ENCODE measurements at regions of chr10 and their contacts with region 1.

Region 1: GRCh38 chr10:52030051-52030790 is 283.9 kb upstream of the DKK1 start:
- DNase-seq: no peak
- H3K4me3 ChIP-seq: no peak overlapping the region
- H3K27ac ChIP-seq: no peak overlapping the region
- H3K4me1 ChIP-seq: peaks cover 0 to 21% (median 5%) of the 10 kb centered on the region in 4 experiments; a peak in 5 of 7 replicates
- H3K27me3 ChIP-seq: no peaks in the 10 kb centered on the region
- CTCF ChIP-seq: no peak
- EP300 ChIP-seq: no peak
- POLR2A ChIP-seq: peak in 1 of 2 experiments; percentile 48; a peak in 1 of 3 replicates
- RAD21 ChIP-seq: no peak

Region 2: DNA sequence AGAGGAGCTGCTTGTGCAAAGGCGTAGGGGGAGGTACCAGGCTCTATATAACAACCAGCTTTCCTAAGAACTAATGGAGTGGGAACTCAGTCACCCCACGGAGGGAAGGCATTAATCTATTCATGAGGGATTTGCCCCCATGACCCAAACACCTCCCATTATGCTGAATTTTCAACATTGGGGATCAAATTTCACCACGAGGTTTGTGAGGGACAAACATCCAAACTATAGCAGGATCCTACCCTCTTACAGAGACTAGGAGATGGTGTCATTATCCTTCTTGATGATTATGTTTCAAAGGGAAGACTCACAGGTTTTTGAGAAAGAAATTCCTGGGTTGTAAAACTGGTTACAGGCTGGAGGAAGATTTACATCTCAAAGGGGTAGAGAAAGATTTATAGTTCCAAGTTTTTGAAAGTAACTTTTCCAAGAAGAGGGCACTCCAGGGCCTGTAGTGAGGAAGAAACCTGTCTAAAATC is 11.1 kb before region 1 on chr10:
- CTCF ChIA-PET with region 1: no interaction called
- POLR2A ChIA-PET with region 1: interaction called, 19 read pairs
- DNase-seq: no peak
- H3K4me3 ChIP-seq: peak overlapping the region in 1 of 4 experiments; percentile 13; a peak in 1 of 8 replicates
- H3K27ac ChIP-seq: no peak overlapping the region
- H3K4me1 ChIP-seq: peaks cover 2 to 14% (median 9%) of the 10 kb centered on the region in 4 experiments; a peak in 4 of 7 replicates
- H3K27me3 ChIP-seq: no peaks in the 10 kb centered on the region
- CTCF ChIP-seq: no peak
- EP300 ChIP-seq: no peak
- POLR2A ChIP-seq: no peak
- RAD21 ChIP-seq: no peak

Region 3: DNA sequence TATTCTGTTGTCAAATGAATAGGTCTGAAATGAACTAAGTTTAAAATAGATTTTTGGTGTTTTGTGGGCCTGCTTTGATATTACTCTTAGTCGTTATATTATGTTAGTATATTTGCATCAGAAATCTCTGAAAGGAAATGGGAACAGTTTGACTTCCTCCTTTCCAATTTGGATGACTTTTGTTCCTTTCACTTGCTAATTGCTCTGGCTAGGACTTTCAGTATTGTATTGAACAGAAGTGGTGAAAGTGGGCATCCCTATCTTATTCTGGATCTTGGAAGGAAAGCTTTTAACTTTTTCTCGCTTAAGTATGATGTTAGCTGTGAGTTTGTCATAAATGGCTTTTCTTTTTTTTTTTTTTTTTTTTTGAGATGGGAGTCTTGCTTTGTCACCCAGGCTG is 10.3 kb after region 1 on chr10:
- CTCF ChIA-PET with region 1: no interaction called
- POLR2A ChIA-PET with region 1: interaction called, 28 read pairs
- DNase-seq: no peak
- H3K4me3 ChIP-seq: peak overlapping the region in 3 of 4 experiments; percentile 11 to 74 (median 24); a peak in 5 of 8 replicates
- H3K27ac ChIP-seq: no peak overlapping the region
- H3K4me1 ChIP-seq: peaks cover 0 to 21% (median 4%) of the 10 kb centered on the region in 4 experiments; a peak in 5 of 7 replicates
- H3K27me3 ChIP-seq: no peaks in the 10 kb centered on the region
- CTCF ChIP-seq: no peak
- EP300 ChIP-seq: peak in 1 of 2 experiments; percentile 22; a peak in 1 of 3 replicates
- POLR2A ChIP-seq: no peak
- RAD21 ChIP-seq: no peak

Region 4: DNA sequence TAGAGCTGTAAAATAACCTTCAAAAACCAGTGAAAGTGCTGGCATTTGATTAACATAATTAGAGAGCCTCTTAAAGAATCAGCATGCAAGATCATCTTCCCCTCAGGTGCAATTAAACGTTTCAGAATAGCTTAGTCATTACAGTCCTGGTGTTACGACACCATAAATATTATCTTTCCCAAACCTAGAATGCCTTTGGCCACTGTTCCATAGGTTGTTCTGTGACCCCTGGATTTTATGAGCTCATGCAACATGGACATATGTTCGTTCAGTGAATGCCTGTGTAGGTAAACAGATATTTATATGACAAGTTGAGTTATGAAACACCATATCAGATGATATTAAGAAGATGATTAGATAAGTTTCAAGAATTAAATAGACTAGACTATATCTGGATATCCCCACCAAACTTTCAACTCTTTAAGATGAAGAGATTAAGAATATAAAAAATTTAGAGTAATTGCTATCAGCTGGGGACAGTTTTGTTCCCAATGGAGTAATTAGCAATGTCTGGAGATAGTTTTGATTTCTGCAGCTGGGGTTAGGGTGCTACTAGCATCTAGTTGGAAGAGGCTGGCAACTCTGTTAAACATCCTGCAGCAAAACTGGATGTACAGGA is 20.3 kb after region 1 on chr10:
- CTCF ChIA-PET with region 1: interaction called, 4 read pairs
- POLR2A ChIA-PET with region 1: interaction called, 14 read pairs
- DNase-seq: no peak
- H3K4me3 ChIP-seq: no peak overlapping the region
- H3K27ac ChIP-seq: no peak overlapping the region
- H3K4me1 ChIP-seq: peaks cover 0 to 4% (median 0%) of the 10 kb centered on the region in 4 experiments; a peak in 1 of 7 replicates
- H3K27me3 ChIP-seq: no peaks in the 10 kb centered on the region
- CTCF ChIP-seq: no peak
- EP300 ChIP-seq: no peak
- POLR2A ChIP-seq: no peak
- RAD21 ChIP-seq: no peak

Region 5: DNA sequence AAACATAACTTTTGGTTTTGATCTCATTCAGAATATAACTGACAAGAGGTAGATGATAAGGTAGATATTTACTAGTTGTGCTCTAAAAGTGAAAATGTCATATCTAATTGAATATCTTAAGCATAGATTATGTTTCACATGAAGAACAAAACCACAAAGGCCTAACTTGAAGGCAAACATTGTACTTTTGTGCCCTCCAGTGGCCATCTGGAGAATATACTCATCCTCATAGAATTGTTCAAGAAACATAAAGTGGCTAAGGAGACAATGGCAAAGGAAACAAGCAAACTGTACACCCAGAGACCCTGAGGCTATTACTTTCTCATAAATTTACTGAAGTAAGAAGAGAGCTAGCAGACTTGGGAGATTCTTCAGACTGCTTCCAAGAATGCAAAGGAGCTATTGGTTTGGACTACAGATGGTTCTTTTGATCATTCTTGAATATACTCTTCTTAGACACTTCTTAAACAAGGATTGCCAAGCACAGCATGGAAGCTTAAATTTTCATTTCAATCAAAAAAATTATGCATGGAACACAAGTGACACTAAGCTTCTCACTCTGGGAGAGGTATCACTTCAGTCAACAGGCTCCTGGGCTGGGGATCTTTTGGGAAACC is 185.6 kb after region 1 on chr10:
- CTCF ChIA-PET with region 1: interaction called, 9 read pairs
- POLR2A ChIA-PET with region 1: interaction called, 10 read pairs
- DNase-seq: no peak
- H3K4me3 ChIP-seq: no peak overlapping the region
- H3K27ac ChIP-seq: no peak overlapping the region
- H3K4me1 ChIP-seq: peaks cover 0 to 18% (median 10%) of the 10 kb centered on the region in 4 experiments; a peak in 3 of 7 replicates
- H3K27me3 ChIP-seq: no peaks in the 10 kb centered on the region
- CTCF ChIP-seq: peak in 2 of 3 experiments; percentile 50 to 71; a peak in 2 of 4 replicates
- EP300 ChIP-seq: no peak
- POLR2A ChIP-seq: no peak
- RAD21 ChIP-seq: peak; percentile 95 to 96

Region 6: DNA sequence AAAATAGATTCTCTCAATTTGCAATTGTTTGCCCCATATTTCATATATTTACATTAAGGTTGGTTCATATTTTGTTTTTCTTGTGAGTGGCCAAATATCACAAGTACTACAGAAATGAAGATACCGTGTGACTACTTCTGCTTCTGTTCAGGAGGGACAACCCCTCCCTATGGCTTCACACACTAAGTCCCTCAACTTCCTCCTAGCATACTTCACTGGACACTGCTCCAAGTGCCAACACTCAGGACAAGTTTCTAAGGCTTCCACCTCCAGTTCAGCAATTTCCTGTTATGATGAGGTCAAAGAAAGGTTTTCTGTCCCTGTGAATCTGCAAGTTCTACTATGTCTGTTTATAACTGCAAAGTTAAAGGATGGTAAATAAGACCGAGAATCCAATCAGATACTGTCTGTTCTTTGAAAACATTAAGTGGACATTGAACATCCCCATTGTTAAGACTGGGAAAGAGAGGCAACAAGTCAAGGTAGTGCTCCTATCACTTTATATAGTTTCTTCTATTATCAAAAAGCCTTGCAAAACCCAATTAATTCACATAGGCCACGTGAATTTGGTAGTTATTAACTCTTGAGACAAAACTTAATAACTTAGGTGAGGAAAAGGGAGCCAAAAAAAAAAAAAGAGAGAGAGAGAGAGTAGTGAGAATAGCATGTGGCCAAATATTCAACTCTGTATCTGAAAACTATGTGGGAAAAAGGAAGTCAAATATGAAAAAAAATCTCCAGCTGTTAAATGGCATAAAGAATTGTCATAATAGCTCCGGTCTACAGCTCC is 202.5 kb after region 1 on chr10:
- CTCF ChIA-PET with region 1: no interaction called
- POLR2A ChIA-PET with region 1: no interaction called
- DNase-seq: no peak
- H3K4me3 ChIP-seq: peak overlapping the region in 3 of 4 experiments; percentile 26 to 43 (median 35); a peak in 4 of 8 replicates
- H3K27ac ChIP-seq: no peak overlapping the region
- H3K4me1 ChIP-seq: peaks cover 0 to 2% (median under 1%) of the 10 kb centered on the region in 4 experiments; a peak in 2 of 7 replicates
- H3K27me3 ChIP-seq: no peaks in the 10 kb centered on the region
- CTCF ChIP-seq: no peak
- EP300 ChIP-seq: no peak
- POLR2A ChIP-seq: no peak
- RAD21 ChIP-seq: no peak

Measured in H1 (cell line).